Cardiac septum (tissue), 1 donor: ENCODE measurements at regions of chr17 and their contacts with region 1.

Region 1: GRCh38 chr17:60333628-60334031 is 58.3 kb downstream of the USP32 start:
- DNase-seq: no peak

Region 2: GRCh38 chr17:60231234-60231633 is 102.4 kb before region 1 on chr17:
- intact Hi-C with region 1: loop called (anchors 10 kb)
- DNase-seq: no peak